Lower lobe of right lung (tissue), 2 donors: ENCODE measurements at regions of chr5 and their contacts with region 1.

Region 1: GRCh38 chr5:149828161-149828884 is 98.2 kb downstream of the PPARGC1B start:
- DNase-seq: peak; percentile 87
- ATAC-seq: peak; percentile 83 to 88
- H3K4me3 ChIP-seq: no peak overlapping the region
- H3K27ac ChIP-seq: no peak overlapping the region
- H3K4me1 ChIP-seq: no peaks in the 10 kb centered on the region
- H3K27me3 ChIP-seq: no peaks in the 10 kb centered on the region
- CTCF ChIP-seq: peak; percentile 93

Region 2: DNA sequence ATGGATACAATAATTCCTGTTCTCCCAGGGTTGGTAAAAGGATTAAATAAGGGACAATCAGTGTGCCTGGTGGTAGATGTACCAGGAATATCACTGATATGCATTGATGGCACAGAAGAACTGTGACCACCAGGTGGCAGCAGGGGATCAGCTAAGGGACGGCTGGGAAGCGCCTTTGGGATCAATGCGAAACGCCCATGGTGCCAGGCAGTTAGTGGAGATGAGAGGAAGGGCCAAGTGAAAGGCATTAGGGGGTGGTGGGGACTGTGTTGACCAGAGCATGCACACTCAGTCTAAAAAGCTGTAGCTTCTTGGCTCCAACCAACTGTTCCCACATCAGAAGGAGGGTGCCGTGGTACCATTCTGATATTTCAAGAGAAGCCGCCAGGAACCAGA is 191.5 kb before region 1 on chr5:
- intact Hi-C with region 1: loop called (anchors 10 kb)
- DNase-seq: no peak
- ATAC-seq: peak; percentile 66 to 79
- H3K4me3 ChIP-seq: no peak overlapping the region
- H3K27ac ChIP-seq: no peak overlapping the region
- H3K4me1 ChIP-seq: no peaks in the 10 kb centered on the region
- H3K27me3 ChIP-seq: no peaks in the 10 kb centered on the region
- CTCF ChIP-seq: peak; percentile 81

Region 3: GRCh38 chr5:149667084-149667828 is 161.1 kb before region 1 on chr5:
- intact Hi-C with region 1: loop called (anchors 10 kb)
- DNase-seq: no peak
- ATAC-seq: peak; percentile 71 to 76
- H3K4me3 ChIP-seq: no peak overlapping the region
- H3K27ac ChIP-seq: peak overlapping the region; percentile 4
- H3K4me1 ChIP-seq: no peaks in the 10 kb centered on the region
- H3K27me3 ChIP-seq: no peaks in the 10 kb centered on the region
- CTCF ChIP-seq: peak; percentile 78

Region 4: GRCh38 chr5:149969181-149969930 is 141.0 kb after region 1 on chr5:
- intact Hi-C with region 1: no loop called
- DNase-seq: no peak
- ATAC-seq: no peak
- H3K4me3 ChIP-seq: no peak overlapping the region
- H3K27ac ChIP-seq: no peak overlapping the region
- H3K4me1 ChIP-seq: no peaks in the 10 kb centered on the region
- H3K27me3 ChIP-seq: no peaks in the 10 kb centered on the region
- CTCF ChIP-seq: no peak